ENCODE measurements at regions of chr6 and their contacts with region 1.

Region 1: DNA sequence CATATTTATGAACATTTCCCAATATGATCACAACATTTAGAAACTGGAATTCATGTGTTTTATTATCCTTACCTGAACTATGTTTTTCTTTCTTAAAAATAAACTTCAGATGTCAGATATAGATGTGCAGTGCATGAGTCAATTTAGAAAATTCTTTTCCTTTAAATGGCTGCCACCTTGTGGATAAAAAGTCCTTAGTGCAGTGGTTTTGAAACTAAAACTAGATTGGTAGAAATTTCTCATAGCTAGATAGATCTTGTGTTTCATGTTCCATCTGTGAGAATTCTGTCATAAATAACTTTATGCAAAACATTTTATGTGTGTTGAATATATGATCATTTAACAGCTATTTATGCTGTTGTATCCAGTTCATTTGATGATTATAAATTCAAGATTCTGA is 134.9 kb downstream of the KLHL32 start:
- DNase-seq: peak; percentile 15 to 33 (median 29)
- ATAC-seq: peak; percentile 78
- H3K4me3 ChIP-seq: no peak overlapping the region
- H3K27ac ChIP-seq: no peak overlapping the region
- H3K4me1 ChIP-seq: no peaks in the 10 kb centered on the region
- H3K27me3 ChIP-seq: no peaks in the 10 kb centered on the region; a peak in 1 of 5 replicates
- CTCF ChIP-seq: peak; percentile 21 to 74 (median 24); a peak in 3 of 6 replicates
- EP300 ChIP-seq: no peak
- POLR2A ChIP-seq: no peak
- RAD21 ChIP-seq: peak; percentile 79 to 87

Region 2: GRCh38 chr6:95364016-95364604 is 1695.4 kb before region 1 on chr6:
- CTCF ChIA-PET with region 1: no interaction called
- POLR2A ChIA-PET with region 1: no interaction called
- in situ Hi-C with region 1: no loop called
- intact Hi-C with region 1: loop called (anchors 10 kb)
- DNase-seq: peak in 2 of 4 experiments; percentile 10 to 14
- ATAC-seq: no peak
- H3K4me3 ChIP-seq: no peak overlapping the region
- H3K27ac ChIP-seq: no peak overlapping the region
- H3K4me1 ChIP-seq: no peaks in the 10 kb centered on the region
- H3K27me3 ChIP-seq: no peaks in the 10 kb centered on the region
- CTCF ChIP-seq: peak in 1 of 3 experiments; percentile 40; a peak in 2 of 6 replicates
- EP300 ChIP-seq: no peak
- POLR2A ChIP-seq: no peak
- RAD21 ChIP-seq: peak; percentile 47 to 69

Region 3: DNA sequence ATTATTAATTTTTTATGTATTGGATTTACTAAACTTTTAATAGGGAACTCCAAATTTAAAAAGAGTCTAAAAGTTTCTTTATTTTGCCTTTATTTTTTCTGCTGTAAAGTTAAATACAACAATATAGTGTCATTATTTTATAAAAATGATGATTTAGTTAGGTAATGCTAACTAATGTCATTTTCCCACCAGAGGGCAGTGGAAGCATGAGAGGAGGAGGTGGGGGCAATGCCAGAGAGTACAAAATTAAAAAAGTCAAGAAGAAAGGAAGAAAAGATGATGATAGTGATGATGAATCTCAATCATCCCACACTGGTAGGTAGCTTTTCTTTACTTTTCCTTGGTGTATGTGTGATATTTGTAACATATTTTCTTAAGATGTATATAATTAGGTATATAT is 516.8 kb before region 1 on chr6:
- CTCF ChIA-PET with region 1: interaction called, 3 read pairs
- POLR2A ChIA-PET with region 1: no interaction called
- in situ Hi-C with region 1: no loop called
- intact Hi-C with region 1: loop called (anchors 10 kb)
- DNase-seq: peak in 2 of 4 experiments; percentile 6 to 30
- ATAC-seq: peak; percentile 72
- H3K4me3 ChIP-seq: no peak overlapping the region
- H3K27ac ChIP-seq: no peak overlapping the region
- H3K4me1 ChIP-seq: no peaks in the 10 kb centered on the region
- H3K27me3 ChIP-seq: no peaks in the 10 kb centered on the region
- CTCF ChIP-seq: peak in 2 of 3 experiments; percentile 27 to 51; a peak in 2 of 6 replicates
- EP300 ChIP-seq: no peak
- POLR2A ChIP-seq: no peak
- RAD21 ChIP-seq: peak in 1 of 2 experiments; percentile 32; a peak in 2 of 4 replicates

Region 4: DNA sequence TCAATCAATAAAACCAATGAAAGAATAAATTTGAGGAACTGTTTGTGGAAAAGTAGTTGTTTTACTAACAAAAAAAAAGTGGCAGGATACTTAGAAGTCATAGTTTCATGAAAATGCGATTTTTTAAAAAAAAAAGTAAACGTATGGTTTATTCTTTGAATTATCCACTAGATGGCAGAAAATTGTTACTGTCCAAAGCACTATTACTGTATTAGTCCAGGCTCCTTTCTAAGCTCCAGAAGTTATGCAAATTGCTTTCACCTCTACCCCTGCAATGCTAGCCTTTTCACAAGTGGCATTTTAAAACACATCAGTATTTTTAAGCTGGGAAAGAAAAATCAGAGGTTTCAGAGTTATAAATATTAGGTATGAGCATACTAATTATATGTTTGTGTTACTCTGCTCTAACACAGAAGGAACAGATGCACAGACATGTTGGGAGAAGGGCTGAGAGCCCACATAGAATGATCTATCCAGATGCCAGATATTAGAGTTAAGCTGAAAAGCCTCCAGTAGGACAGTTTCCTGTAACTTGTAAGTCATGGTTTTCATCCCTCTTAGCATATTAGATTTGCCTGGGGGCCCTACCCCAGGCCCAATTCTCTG is 432.6 kb before region 1 on chr6:
- CTCF ChIA-PET with region 1: interaction called, 9 read pairs
- POLR2A ChIA-PET with region 1: no interaction called
- in situ Hi-C with region 1: loop called (anchors 5 kb)
- intact Hi-C with region 1: loop called (anchors 1 kb)
- DNase-seq: peak; percentile 8 to 21 (median 14)
- ATAC-seq: peak; percentile 82
- H3K4me3 ChIP-seq: no peak overlapping the region
- H3K27ac ChIP-seq: no peak overlapping the region
- H3K4me1 ChIP-seq: 0 out of 5 replicates have a peak, but pooled peaks cover 0 to 5% of the 10 kb centered on the region in 2 experiments
- H3K27me3 ChIP-seq: no peaks in the 10 kb centered on the region
- CTCF ChIP-seq: peak in 2 of 3 experiments; percentile 9 to 64; a peak in 3 of 6 replicates
- EP300 ChIP-seq: no peak
- POLR2A ChIP-seq: no peak
- RAD21 ChIP-seq: peak; percentile 65 to 85

Region 5: DNA sequence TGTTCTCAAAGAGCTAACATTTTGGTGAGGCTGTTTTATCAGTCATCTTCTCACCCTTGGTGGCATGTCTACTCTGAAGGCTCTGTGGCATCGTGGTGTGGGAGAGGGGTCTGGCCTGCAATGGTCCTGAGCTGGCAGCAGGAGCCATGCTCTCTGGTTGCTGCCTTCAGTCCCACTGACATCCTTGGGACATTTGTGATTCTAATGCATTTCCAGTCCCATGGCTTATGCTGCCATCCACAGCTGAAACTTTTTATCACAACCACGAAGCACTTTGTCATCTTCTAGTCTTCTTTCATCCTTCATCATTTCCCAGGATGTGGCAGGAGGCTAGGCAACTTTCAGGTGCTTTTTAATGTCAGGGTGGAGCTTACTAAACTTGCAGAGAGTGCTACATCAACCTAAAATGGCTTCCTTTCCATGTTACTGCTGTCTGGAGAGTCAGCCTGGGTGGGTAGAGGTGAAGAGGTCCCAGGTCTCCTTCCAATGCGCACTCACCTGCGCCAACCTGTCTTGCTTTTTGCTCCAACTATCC is 299.3 kb before region 1 on chr6:
- CTCF ChIA-PET with region 1: no interaction called
- POLR2A ChIA-PET with region 1: no interaction called
- in situ Hi-C with region 1: no loop called
- intact Hi-C with region 1: loop called (anchors 10 kb)
- DNase-seq: no peak
- ATAC-seq: no peak; the same call in 2 of the 3 replicates
- H3K4me3 ChIP-seq: no peak overlapping the region
- H3K27ac ChIP-seq: no peak overlapping the region
- H3K4me1 ChIP-seq: no peaks in the 10 kb centered on the region
- H3K27me3 ChIP-seq: peaks cover 6 to 23% of the 10 kb centered on the region in 2 experiments; a peak in 3 of 5 replicates
- CTCF ChIP-seq: peak in 1 of 3 experiments; percentile 18; a peak in 2 of 6 replicates
- EP300 ChIP-seq: no peak
- POLR2A ChIP-seq: no peak
- RAD21 ChIP-seq: peak in 1 of 2 experiments; percentile 33; a peak in 1 of 4 replicates

Region 6: GRCh38 chr6:97019315-97019714 is 40.2 kb before region 1 on chr6:
- CTCF ChIA-PET with region 1: no interaction called
- POLR2A ChIA-PET with region 1: no interaction called
- in situ Hi-C with region 1: no loop called
- intact Hi-C with region 1: no loop called
- DNase-seq: no peak
- ATAC-seq: no peak
- H3K4me3 ChIP-seq: no peak overlapping the region
- H3K27ac ChIP-seq: no peak overlapping the region
- H3K4me1 ChIP-seq: no peaks in the 10 kb centered on the region
- H3K27me3 ChIP-seq: no peaks in the 10 kb centered on the region; a peak in 1 of 5 replicates
- CTCF ChIP-seq: no peak
- EP300 ChIP-seq: no peak
- POLR2A ChIP-seq: no peak
- RAD21 ChIP-seq: no peak